ENCODE measurements at regions of chr7 and their contacts with region 1.

Region 1: DNA sequence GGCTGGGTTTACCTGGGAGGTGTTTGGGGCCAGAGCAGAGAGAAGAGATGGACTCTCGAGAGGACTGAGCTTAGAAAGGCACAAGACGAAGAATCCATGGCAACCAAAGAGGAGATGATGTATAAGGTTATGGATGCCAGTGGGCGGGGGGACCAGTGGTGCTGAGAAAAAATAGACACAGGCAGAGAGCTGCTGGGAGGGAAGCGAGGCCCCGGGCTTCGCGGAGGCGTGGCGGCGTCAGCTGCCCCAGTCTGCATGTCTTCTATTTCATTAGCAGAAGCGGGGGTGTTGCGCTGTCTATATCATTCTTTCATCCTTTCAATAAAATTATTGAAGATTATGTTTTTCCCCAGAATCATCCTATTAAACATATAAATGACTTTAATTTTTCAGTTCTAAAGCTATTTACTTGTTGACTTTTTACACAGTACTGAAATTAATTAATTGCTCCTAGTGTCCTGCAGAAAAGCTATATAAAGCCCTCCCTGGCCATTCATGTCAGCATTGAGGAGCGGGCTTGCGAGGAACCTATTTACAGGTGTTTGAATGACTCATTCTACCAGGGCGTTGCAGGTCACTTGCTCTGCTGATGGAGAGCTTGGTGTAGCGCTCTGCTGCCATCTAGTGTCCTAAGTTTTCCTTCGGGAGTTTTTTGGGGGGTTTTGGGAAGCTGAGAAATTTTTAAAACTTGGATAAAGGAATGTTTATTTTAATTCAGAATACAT is 42.9 kb upstream of the BHLHA15 start:
- DNase-seq: peak in 9 of 10 donors; percentile 49 to 78 (median 65)
- H3K4me3 ChIP-seq: peak overlapping the region in 16 of 59 donors; percentile 3 to 40 (median 12)
- H3K27ac ChIP-seq: peak overlapping the region in 38 of 59 donors; percentile 5 to 79 (median 52)
- H3K27me3 ChIP-seq: no peaks in the 10 kb centered on the region
- CTCF ChIP-seq: peak; percentile 60 to 95 (median 83)

Region 2: GRCh38 chr7:98021588-98022351 is 146.6 kb before region 1 on chr7:
- intact Hi-C with region 1: loop called (anchors 1 to 2 kb)
- DNase-seq: peak; percentile 77 to 89 (median 87)
- H3K4me3 ChIP-seq: no peak overlapping the region
- H3K27ac ChIP-seq: no peak overlapping the region
- H3K27me3 ChIP-seq: peaks cover 0 to 4% (median 0%) of the 10 kb centered on the region in 45 donors
- CTCF ChIP-seq: peak; percentile 92 to 100 (median 97)

Region 3: GRCh38 chr7:98119256-98119918 is 49.0 kb before region 1 on chr7:
- intact Hi-C with region 1: no loop called
- DNase-seq: no peak
- H3K4me3 ChIP-seq: no peak overlapping the region
- H3K27ac ChIP-seq: no peak overlapping the region
- H3K27me3 ChIP-seq: no peaks in the 10 kb centered on the region
- CTCF ChIP-seq: no peak

Region 4: DNA sequence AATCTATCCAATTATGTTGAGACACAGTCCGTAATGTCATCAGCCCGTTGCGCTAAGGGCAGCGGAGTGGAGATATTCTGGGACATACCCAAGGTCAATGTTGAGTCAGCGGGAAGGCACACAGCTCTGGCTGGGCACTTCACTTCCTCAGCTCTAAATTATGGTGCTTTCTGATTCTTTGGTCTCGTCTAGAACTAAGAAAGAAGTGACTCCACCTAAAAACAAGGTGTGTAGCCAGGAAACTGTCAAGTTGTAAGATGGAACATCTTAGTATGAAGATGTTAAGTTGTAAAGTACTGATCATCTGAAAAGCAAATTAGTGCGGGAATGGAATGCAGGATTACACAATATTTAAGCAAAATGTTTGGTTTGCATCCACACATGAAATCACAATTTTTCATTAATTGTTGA is 189.4 kb after region 1 on chr7:
- intact Hi-C with region 1: no loop called
- DNase-seq: no peak
- H3K4me3 ChIP-seq: no peak overlapping the region
- H3K27ac ChIP-seq: no peak overlapping the region
- H3K27me3 ChIP-seq: no peaks in the 10 kb centered on the region
- CTCF ChIP-seq: no peak

Measured in dorsolateral prefrontal cortex (tissue), 120 donors.